Activated CD4-positive, alpha-beta T cell treated with anti-CD3 and anti-CD28 coated beads, Interleukin-2, amount 10 ng/mL, durations not matched to agents 7 days and 5 days (primary cell): ENCODE measurements at regions of chr9 and their contacts with region 1.

Region 1: GRCh38 chr9:136400038-136400834 is at the start of gene SNAPC4:
- DNase-seq: peak; percentile 86
- H3K4me3 Mint-ChIP-seq: peak within 1 kb of the TSS; percentile 80
- H3K27ac Mint-ChIP-seq: peak within 1 kb of the TSS; percentile 86
- H3K4me1 Mint-ChIP-seq: peaks cover 57% of the 10 kb centered on the region
- H3K27me3 Mint-ChIP-seq: no peaks in the 10 kb centered on the region
- total RNA-seq, gene SNAPC4: 9.4 to 10.8 TPM

Region 2: GRCh38 chr9:136363606-136364370 is 36.4 kb before region 1 on chr9 and contains the start of gene DNLZ:
- CTCF ChIA-PET with region 1: interaction called, 17 read pairs
- POLR2A ChIA-PET with region 1: no interaction called
- DNase-seq: peak; percentile 88
- H3K4me3 Mint-ChIP-seq: peak within 1 kb of the TSS; percentile 84
- H3K27ac Mint-ChIP-seq: peak within 1 kb of the TSS; percentile 92
- H3K4me1 Mint-ChIP-seq: peaks cover 4% of the 10 kb centered on the region
- H3K27me3 Mint-ChIP-seq: no peaks in the 10 kb centered on the region
- total RNA-seq, gene DNLZ: 13.1 to 14.6 TPM

Region 3: DNA sequence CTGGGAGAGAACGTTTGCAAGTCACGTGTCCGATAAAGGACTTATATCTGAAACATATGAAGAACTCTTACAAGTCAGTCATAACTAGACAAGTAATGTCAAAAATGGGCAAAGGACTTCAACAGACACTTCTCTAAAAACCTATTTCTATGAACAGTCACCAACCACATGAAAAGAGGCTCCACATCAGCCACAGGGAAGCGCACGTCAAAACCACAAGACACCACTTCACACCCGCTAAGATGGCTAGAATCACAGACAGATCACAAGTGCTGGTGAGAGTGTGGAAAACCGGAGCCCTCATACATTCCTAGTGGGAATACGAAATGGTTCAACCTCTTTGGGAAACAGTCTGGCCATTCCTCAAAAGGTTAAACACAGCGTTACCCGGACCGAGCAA is 15.2 kb before region 1 on chr9:
- CTCF ChIA-PET with region 1: interaction called, 40 read pairs
- POLR2A ChIA-PET with region 1: no interaction called
- DNase-seq: peak; percentile 73
- H3K4me3 Mint-ChIP-seq: peak overlapping the region; percentile 24
- H3K27ac Mint-ChIP-seq: peak overlapping the region; percentile 77
- H3K4me1 Mint-ChIP-seq: peaks cover 35% of the 10 kb centered on the region
- H3K27me3 Mint-ChIP-seq: no peaks in the 10 kb centered on the region